Caco-2 (cell line): ENCODE measurements at regions of chr5 and their contacts with region 1.

Region 1: GRCh38 chr5:55540024-55540423 is 5.3 kb upstream of the PLPP1 start:
- DNase-seq: no peak
- H3K4me3 ChIP-seq: no peak overlapping the region
- H3K4me3 Mint-ChIP-seq: no peak overlapping the region
- H3K27ac Mint-ChIP-seq: peak overlapping the region; percentile 75
- H3K4me1 ChIP-seq: peaks cover 28% of the 10 kb centered on the region
- H3K4me1 Mint-ChIP-seq: peaks cover 40% of the 10 kb centered on the region
- H3K27me3 ChIP-seq: no peaks in the 10 kb centered on the region
- H3K27me3 Mint-ChIP-seq: no peaks in the 10 kb centered on the region
- CTCF ChIP-seq: no peak

Region 2: DNA sequence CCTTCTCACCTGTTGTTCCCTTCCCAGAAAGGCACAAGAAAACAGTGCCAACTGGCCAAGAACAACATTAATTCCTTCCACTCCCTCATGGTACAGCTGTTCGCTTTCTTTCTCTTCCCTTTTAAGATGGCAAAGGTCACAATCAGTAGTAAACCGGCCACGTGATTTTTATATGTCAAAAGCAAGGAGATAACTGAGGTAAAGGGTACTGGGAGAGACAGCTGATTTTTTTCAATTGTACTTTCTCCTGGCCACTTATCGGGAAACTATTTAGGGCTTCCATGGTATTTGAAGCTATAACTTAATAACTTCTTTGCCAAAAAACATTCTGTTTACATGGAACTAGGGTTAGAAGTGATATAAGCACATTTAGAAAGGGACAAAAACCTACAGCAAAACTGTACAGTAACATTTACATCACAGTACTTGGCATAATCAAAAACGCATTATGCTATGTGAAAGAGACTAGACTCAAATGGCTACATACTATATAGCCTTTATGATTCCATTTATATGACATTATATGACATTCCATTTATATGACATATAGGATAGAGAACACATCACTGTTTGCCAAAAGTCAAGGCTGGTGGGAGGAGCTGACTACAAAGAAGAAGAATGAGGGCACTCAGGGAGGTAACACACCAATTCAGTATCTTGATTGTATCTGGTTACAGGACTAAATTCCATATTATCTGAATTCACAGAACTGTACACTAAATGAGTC is 30.1 kb before region 1 on chr5:
- CTCF ChIA-PET with region 1: no interaction called
- POLR2A ChIA-PET with region 1: no interaction called
- intact Hi-C with region 1: no loop called
- DNase-seq: no peak
- H3K4me3 ChIP-seq: no peak overlapping the region
- H3K4me3 Mint-ChIP-seq: no peak overlapping the region
- H3K27ac Mint-ChIP-seq: no peak overlapping the region
- H3K4me1 ChIP-seq: peaks cover 31% of the 10 kb centered on the region
- H3K4me1 Mint-ChIP-seq: peaks cover 23% of the 10 kb centered on the region
- H3K27me3 ChIP-seq: no peaks in the 10 kb centered on the region
- H3K27me3 Mint-ChIP-seq: no peaks in the 10 kb centered on the region
- CTCF ChIP-seq: no peak

Region 3: DNA sequence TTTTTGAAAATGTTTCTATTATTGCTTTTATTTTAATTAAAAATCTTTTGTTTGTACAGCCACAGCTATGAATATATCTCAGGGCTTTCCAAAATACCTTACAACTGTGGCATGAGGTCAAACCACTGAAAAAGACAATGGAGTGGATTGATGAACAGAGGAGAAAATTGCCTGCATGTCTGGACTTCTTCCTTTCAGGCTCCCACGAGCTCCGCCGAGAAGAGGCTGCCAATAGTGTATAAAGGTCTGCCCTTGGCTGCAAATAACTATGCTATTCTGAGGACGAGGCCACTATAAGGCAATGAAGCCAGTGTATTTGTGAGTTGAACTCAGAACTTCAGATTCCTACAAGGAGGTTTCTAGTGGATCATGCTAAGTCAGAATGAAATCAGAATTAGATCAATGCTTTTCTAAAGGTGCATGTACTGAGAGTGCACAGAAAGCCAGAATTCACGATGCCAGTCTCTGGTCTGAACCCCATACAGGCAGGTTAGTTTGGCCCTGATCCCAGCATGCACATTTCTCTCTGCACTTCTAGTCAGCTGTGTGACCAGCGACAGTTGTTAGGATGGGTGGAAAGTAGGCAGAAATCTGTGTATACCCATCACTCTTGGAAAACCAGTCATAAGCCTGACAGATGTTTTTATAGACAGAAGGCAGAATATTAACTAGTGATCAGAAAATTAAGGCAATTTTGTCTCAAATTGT is 37.5 kb after region 1 on chr5:
- CTCF ChIA-PET with region 1: no interaction called
- POLR2A ChIA-PET with region 1: no interaction called
- intact Hi-C with region 1: loop called (anchors 2 kb)
- DNase-seq: no peak
- H3K4me3 ChIP-seq: no peak overlapping the region
- H3K4me3 Mint-ChIP-seq: no peak overlapping the region
- H3K27ac Mint-ChIP-seq: peak overlapping the region; percentile 23
- H3K4me1 ChIP-seq: peaks cover 49% of the 10 kb centered on the region
- H3K4me1 Mint-ChIP-seq: peaks cover 28% of the 10 kb centered on the region
- H3K27me3 ChIP-seq: no peaks in the 10 kb centered on the region
- H3K27me3 Mint-ChIP-seq: no peaks in the 10 kb centered on the region
- CTCF ChIP-seq: no peak

Region 4: GRCh38 chr5:55868846-55869245 is 328.8 kb after region 1 on chr5:
- CTCF ChIA-PET with region 1: no interaction called
- POLR2A ChIA-PET with region 1: no interaction called
- intact Hi-C with region 1: no loop called
- DNase-seq: no peak
- H3K4me3 ChIP-seq: no peak overlapping the region
- H3K4me3 Mint-ChIP-seq: no peak overlapping the region
- H3K27ac Mint-ChIP-seq: no peak overlapping the region
- H3K4me1 ChIP-seq: no peaks in the 10 kb centered on the region
- H3K4me1 Mint-ChIP-seq: no peaks in the 10 kb centered on the region
- H3K27me3 ChIP-seq: no peaks in the 10 kb centered on the region
- H3K27me3 Mint-ChIP-seq: no peaks in the 10 kb centered on the region
- CTCF ChIP-seq: no peak